HEK293 (cell line): ENCODE measurements at regions of chr9 and their contacts with region 1.

Region 1: DNA sequence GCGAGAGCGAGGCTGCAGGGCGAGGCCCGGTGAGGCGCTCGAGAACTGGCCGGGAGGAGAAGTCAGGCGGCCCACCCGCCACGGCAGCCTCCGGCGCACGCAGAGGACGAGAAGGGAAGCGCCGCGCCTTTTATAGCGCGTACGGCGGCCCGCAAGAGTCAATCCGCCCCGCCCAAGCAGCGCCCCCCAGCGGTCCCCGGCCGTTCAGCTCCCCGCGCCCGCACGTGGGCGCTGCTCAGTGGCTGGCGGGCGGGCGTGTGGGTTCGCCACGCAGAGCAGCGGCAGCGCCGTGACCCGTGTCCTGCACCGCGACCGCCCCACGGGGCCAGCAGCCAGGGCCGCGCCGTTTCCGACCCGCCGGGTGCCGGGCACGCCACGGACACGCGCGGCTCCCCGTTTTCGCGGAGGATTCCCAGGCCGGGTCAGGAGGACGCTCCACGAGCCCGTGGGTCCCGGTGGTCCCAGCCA is 14.6 kb downstream of the LCN10 start:
- H3K4me3 ChIP-seq: peak overlapping the region; percentile 59
- H3K27ac ChIP-seq: peak overlapping the region; percentile 71
- H3K4me1 ChIP-seq: no peaks in the 10 kb centered on the region; the same call in 1 of the 2 replicates
- CTCF ChIP-seq: peak; percentile 98

Region 2: DNA sequence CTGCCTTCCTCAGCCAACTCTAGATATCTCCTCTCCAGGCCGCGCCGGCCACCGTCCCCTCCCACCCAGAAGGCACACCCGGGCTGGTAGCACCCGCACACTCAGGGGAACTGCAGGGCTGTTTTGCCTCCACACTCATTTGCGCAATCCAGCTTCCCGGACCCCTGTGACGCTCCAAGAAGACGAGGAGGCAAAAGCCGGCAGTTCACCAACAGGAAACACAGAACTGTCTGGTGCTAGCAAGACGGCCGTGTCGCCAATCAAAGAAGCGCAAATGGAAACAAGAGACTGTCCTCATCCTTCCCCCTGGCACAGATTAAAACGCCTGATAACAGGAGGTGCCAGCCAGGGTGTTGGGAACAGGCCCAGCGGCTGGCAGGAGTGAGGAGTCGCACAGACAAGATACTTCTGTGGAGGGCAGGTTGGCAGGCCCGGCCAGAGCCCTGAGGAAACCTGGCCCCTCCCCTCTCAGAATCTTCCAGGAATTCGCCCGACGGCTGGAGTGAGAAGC is 48.6 kb before region 1 on chr9:
- CTCF ChIA-PET with region 1: interaction called, 3 read pairs
- POLR2A ChIA-PET with region 1: interaction called, 10 read pairs
- H3K4me3 ChIP-seq: no peak overlapping the region
- H3K27ac ChIP-seq: no peak overlapping the region
- H3K4me1 ChIP-seq: no peaks in the 10 kb centered on the region
- CTCF ChIP-seq: no peak

Region 3: GRCh38 chr9:136711751-136712689 is 16.1 kb before region 1 on chr9 and contains the start of gene DIPK1B:
- CTCF ChIA-PET with region 1: interaction called, 14 read pairs
- POLR2A ChIA-PET with region 1: interaction called, 79 read pairs
- H3K4me3 ChIP-seq: peak within 1 kb of the TSS; percentile 70
- H3K27ac ChIP-seq: peak within 1 kb of the TSS; percentile 80
- H3K4me1 ChIP-seq: no peaks in the 10 kb centered on the region
- CTCF ChIP-seq: no peak

Region 4: DNA sequence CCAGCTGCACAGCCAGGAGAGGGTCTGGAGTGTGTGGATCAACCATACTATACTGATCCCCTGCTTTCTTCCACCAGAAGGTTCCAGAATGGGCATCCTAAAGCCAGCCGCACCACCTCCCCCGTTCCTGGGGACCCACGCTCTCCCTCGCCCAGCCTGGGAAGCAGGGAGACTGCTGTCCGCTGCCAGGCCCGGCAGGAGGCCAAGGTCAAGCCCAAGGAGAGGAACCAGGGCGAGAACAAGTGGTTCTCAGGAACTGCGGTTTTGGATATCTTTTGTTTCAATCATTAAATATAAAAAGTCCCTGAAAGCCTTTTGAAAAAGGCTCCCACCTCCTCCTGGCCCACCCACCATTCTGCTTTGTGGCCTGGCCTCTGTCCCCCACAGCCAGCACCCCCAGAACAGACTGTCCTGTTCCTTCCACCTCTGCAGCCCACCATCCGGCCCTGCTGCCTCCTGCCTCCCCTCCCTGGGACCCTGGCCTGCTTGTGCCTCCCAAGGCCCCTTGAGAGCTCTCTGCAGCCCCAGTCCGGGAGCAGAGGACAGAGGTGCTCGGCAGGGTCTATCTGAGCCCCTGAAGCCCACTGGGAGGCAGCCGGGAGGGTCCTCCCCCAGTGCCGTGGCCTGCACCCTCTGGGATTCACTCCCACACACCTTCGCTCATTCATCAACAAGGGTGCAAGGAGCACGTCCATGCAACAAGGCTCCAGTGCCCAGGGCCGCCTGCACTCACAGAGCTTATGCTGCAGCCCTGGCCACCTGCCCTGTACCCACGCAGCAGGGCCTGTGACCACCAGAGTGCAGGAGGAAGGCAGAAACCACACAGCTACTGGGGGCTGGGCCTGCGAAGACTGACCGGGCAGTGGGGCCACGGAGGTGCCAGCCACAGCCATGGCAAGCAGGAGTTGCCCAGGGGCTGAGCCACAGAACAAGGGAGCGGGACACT is 20.8 kb after region 1 on chr9:
- CTCF ChIA-PET with region 1: interaction called, 5 read pairs
- POLR2A ChIA-PET with region 1: interaction called, 22 read pairs
- H3K4me3 ChIP-seq: no peak overlapping the region
- H3K27ac ChIP-seq: no peak overlapping the region
- H3K4me1 ChIP-seq: no peaks in the 10 kb centered on the region
- CTCF ChIP-seq: no peak

Region 5: GRCh38 chr9:136762915-136763648 is 35.0 kb after region 1 on chr9:
- CTCF ChIA-PET with region 1: interaction called, 13 read pairs
- POLR2A ChIA-PET with region 1: interaction called, 14 read pairs
- H3K4me3 ChIP-seq: no peak overlapping the region
- H3K27ac ChIP-seq: no peak overlapping the region
- H3K4me1 ChIP-seq: no peaks in the 10 kb centered on the region
- CTCF ChIP-seq: no peak

Region 6: GRCh38 chr9:136858844-136859757 is 131.0 kb after region 1 on chr9:
- CTCF ChIA-PET with region 1: no interaction called
- POLR2A ChIA-PET with region 1: no interaction called
- H3K4me3 ChIP-seq: no peak overlapping the region
- H3K27ac ChIP-seq: no peak overlapping the region
- H3K4me1 ChIP-seq: no peaks in the 10 kb centered on the region
- CTCF ChIP-seq: no peak